Cardiac septum (tissue), 1 donor: ENCODE measurements at regions of chr9 and their contacts with region 1.

Region 1: DNA sequence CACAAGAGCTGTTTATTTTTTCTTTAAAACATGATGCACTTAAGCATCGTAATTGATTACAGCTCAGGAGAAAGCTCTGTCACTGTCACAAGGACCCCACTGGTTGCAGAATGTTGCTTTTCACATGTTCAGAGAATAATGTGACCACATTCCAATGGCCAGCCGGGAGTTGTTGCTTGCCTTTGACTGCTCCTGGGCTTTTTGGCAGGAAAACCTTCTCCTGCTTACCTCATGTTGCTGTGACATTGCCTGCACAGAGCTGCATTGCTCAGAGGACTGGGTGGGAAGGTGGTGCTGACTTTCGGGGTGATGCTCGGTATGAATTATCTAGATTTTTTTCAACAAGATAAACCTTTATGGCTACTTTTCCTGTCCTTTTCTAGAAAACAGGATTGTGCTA is 88.2 kb downstream of the PALM2AKAP2 start:
- DNase-seq: no peak

Region 2: DNA sequence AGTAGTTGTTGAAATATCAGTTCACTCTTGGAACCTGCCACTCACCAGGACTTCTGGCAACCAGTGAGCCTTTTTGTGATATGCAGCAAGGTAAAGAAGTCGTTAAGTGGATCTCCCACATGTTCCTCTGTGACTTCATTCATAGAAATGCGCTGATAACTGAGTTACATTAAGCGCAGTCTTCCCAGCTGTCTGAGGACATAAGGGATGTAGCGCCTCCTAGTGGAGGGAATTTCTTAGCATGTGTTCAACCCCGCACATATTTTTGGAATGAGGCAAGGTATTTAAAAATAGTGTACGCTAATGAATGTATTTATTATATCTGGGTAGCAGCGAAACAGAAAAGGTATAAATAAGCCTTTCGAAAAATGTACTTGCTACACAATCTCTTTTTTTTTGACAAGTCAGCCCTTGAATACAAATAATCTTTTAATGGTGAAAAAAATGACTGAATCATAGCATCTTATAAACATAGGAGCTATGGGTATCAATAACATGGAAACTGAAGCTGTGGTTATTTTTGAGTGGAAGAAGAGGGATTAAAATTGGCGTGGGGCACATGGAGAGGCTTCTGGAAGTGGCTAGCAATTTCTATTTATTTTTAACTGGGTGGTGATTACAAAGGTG is 50.2 kb before region 1 on chr9:
- intact Hi-C with region 1: loop called (anchors 5 kb)
- DNase-seq: no peak